Right cardiac atrium (tissue), 5 donors: ENCODE measurements at regions of chr18 and their contacts with region 1.

Region 1: DNA sequence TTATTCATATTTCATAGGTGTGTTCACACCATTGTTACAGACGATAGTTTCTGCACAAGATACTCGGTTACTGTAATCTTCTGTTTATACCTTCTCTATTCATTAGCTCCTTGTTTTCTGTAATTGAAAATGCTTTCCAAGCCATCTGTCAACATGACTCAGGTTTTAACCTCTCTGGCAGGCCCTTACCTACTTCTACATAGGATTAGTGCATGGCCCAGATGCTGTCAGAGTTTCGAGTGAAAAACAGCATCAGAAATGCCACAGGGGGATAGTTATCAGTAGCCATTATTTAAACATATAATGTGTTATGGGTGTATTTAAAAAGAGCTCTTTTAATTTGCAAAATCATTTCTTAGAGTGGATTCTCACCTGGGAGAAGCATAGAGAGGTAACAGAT is 596.4 kb downstream of the FBXO15 start:
- DNase-seq: no peak
- ATAC-seq: no peak
- H3K4me3 ChIP-seq: no peak overlapping the region
- H3K27ac ChIP-seq: no peak overlapping the region
- H3K4me1 ChIP-seq: no peaks in the 10 kb centered on the region
- H3K27me3 ChIP-seq: no peaks in the 10 kb centered on the region

Region 2: DNA sequence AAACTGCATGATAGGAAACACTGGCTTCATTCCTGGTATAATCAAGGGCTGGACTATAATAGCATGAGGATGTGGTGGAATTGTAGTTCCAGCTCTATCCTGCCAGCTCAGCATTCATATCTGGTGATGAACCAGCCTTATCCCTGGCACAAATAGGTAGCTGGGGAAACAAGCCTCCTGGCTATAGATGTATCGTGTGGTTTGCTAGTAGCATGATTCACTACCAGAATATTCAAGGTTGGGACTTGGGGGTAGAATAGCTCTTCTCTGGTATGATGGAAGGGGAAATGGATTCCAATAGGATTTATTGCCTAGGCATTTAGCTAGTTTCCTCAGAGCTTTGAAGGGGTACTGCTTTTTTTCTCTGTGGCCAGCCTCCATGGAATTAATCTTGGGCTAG is 63.6 kb after region 1 on chr18:
- intact Hi-C with region 1: loop called in 1 of 4 experiments (anchors 10 kb)
- DNase-seq: no peak
- ATAC-seq: no peak
- H3K4me3 ChIP-seq: no peak overlapping the region
- H3K27ac ChIP-seq: no peak overlapping the region
- H3K4me1 ChIP-seq: no peaks in the 10 kb centered on the region
- H3K27me3 ChIP-seq: no peaks in the 10 kb centered on the region